ENCODE measurements at regions of chr5 and their contacts with region 1.

Region 1: DNA sequence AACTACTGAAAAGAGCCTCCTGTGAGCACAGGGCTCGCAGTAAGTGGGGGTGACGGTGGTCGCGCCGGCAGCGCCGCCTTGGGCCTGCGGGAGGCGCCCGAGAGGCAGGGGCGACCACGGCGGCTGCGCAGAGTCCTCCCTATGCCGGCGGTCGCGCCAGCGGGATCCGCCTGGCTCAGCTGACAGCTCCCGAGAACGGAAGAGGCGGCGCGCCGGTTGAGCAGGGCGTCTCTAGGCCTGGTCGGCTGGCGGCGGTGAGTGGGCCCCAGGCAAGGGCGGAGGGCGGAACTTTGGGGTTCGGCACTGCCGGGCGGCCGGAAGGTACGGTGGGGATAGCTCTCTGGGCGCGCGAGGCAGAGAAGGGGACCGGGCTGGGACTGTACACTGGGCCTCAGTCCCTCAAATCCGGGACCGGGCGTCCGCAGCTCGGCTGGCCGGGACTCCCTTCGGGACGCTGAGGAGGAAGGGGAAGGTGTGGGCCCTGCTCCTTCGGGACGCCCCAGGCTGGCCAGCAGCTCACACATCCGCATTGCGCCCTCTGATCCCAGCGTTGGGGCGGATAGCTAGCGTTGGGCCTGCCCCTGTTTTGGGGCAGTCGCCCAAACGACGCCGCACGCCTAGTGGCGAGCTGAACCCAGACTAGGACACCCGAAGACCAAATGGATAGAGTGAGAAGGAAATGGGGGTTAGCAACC is at the start of gene RNF14:
- DNase-seq: peak; percentile 90 to 96 (median 92)
- ATAC-seq: peak; percentile 97
- H3K4me3 ChIP-seq: peak within 1 kb of the TSS; percentile 69
- H3K4me3 Mint-ChIP-seq: peak within 1 kb of the TSS; percentile 88 to 97 (median 94)
- H3K27ac ChIP-seq: peak within 1 kb of the TSS; percentile 94
- H3K27ac Mint-ChIP-seq: peak within 1 kb of the TSS; percentile 92 to 98 (median 97)
- H3K4me1 ChIP-seq: peaks cover 13 to 18% of the 10 kb centered on the region in 2 donors
- H3K4me1 Mint-ChIP-seq: peaks cover 12 to 47% (median 40%) of the 10 kb centered on the region in 7 donors
- H3K27me3 ChIP-seq: no peaks in the 10 kb centered on the region
- H3K27me3 Mint-ChIP-seq: peaks cover 0 to 2% (median 0%) of the 10 kb centered on the region in 5 donors
- total RNA-seq, gene RNF14: 14.7 to 32.0 (median 24.8) TPM

Region 2: GRCh38 chr5:141664732-141665461 is 304.2 kb before region 1 on chr5:
- CTCF ChIA-PET with region 1: no interaction called
- POLR2A ChIA-PET with region 1: no interaction called
- intact Hi-C with region 1: loop called in 1 of 2 experiments (anchors 2 kb)
- DNase-seq: peak; percentile 36 to 75 (median 61)
- ATAC-seq: peak; percentile 94
- H3K4me3 ChIP-seq: no peak overlapping the region
- H3K4me3 Mint-ChIP-seq: no peak overlapping the region
- H3K27ac ChIP-seq: no peak overlapping the region
- H3K27ac Mint-ChIP-seq: no peak overlapping the region
- H3K4me1 ChIP-seq: no peaks in the 10 kb centered on the region
- H3K4me1 Mint-ChIP-seq: peaks cover 0 to 6% (median 3%) of the 10 kb centered on the region in 7 donors
- H3K27me3 ChIP-seq: no peaks in the 10 kb centered on the region
- H3K27me3 Mint-ChIP-seq: no peaks in the 10 kb centered on the region

Region 3: GRCh38 chr5:141934099-141934844 is 34.8 kb before region 1 on chr5:
- CTCF ChIA-PET with region 1: no interaction called
- POLR2A ChIA-PET with region 1: no interaction called
- intact Hi-C with region 1: no loop called
- DNase-seq: no peak
- ATAC-seq: no peak
- H3K4me3 ChIP-seq: no peak overlapping the region
- H3K4me3 Mint-ChIP-seq: no peak overlapping the region
- H3K27ac ChIP-seq: no peak overlapping the region
- H3K27ac Mint-ChIP-seq: no peak overlapping the region
- H3K4me1 ChIP-seq: no peaks in the 10 kb centered on the region
- H3K4me1 Mint-ChIP-seq: peaks cover 0 to 18% (median 6%) of the 10 kb centered on the region in 7 donors
- H3K27me3 ChIP-seq: no peaks in the 10 kb centered on the region
- H3K27me3 Mint-ChIP-seq: no peaks in the 10 kb centered on the region

Region 4: GRCh38 chr5:141992349-141992963 is 23.4 kb after region 1 on chr5:
- CTCF ChIA-PET with region 1: interaction called, 13 read pairs
- POLR2A ChIA-PET with region 1: interaction called, 8 read pairs
- intact Hi-C with region 1: no loop called
- DNase-seq: peak; percentile 49 to 77 (median 69)
- ATAC-seq: peak; percentile 88
- H3K4me3 ChIP-seq: no peak overlapping the region
- H3K4me3 Mint-ChIP-seq: no peak overlapping the region
- H3K27ac ChIP-seq: no peak overlapping the region
- H3K27ac Mint-ChIP-seq: peak overlapping the region in 2 of 9 donors; percentile 52 to 71
- H3K4me1 ChIP-seq: no peaks in the 10 kb centered on the region
- H3K4me1 Mint-ChIP-seq: peaks cover 4 to 18% (median 7%) of the 10 kb centered on the region in 7 donors
- H3K27me3 ChIP-seq: no peaks in the 10 kb centered on the region
- H3K27me3 Mint-ChIP-seq: no peaks in the 10 kb centered on the region

Region 5: GRCh38 chr5:142024771-142025304 is 55.8 kb after region 1 on chr5:
- CTCF ChIA-PET with region 1: interaction called, 3 read pairs
- POLR2A ChIA-PET with region 1: interaction called, 8 read pairs
- intact Hi-C with region 1: loop called (anchors 1 to 2 kb)
- DNase-seq: peak; percentile 61 to 85 (median 82)
- ATAC-seq: peak; percentile 100
- H3K4me3 ChIP-seq: peak overlapping the region; percentile 62
- H3K4me3 Mint-ChIP-seq: peak overlapping the region; percentile 81 to 97 (median 92)
- H3K27ac ChIP-seq: peak overlapping the region; percentile 79
- H3K27ac Mint-ChIP-seq: peak overlapping the region; percentile 96 to 100 (median 98)
- H3K4me1 ChIP-seq: peaks cover 4 to 11% of the 10 kb centered on the region in 2 donors
- H3K4me1 Mint-ChIP-seq: peaks cover 5 to 20% (median 18%) of the 10 kb centered on the region in 7 donors
- H3K27me3 ChIP-seq: no peaks in the 10 kb centered on the region
- H3K27me3 Mint-ChIP-seq: no peaks in the 10 kb centered on the region

Region 6: GRCh38 chr5:142221091-142221860 is 252.2 kb after region 1 on chr5:
- CTCF ChIA-PET with region 1: no interaction called
- POLR2A ChIA-PET with region 1: no interaction called
- intact Hi-C with region 1: loop called in 1 of 2 experiments (anchors 10 kb)
- DNase-seq: no peak
- ATAC-seq: no peak
- H3K4me3 ChIP-seq: no peak overlapping the region
- H3K4me3 Mint-ChIP-seq: peak overlapping the region in 3 of 10 donors; percentile 17 to 31 (median 19)
- H3K27ac ChIP-seq: no peak overlapping the region
- H3K27ac Mint-ChIP-seq: peak overlapping the region in 3 of 9 donors; percentile 3 to 52 (median 6)
- H3K4me1 ChIP-seq: peaks cover 6 to 25% of the 10 kb centered on the region in 2 donors
- H3K4me1 Mint-ChIP-seq: peaks cover 18 to 39% (median 34%) of the 10 kb centered on the region in 7 donors
- H3K27me3 ChIP-seq: no peaks in the 10 kb centered on the region
- H3K27me3 Mint-ChIP-seq: peaks cover 0 to 10% (median 0%) of the 10 kb centered on the region in 5 donors

Region 7: GRCh38 chr5:142263346-142263745 is 294.3 kb after region 1 on chr5:
- CTCF ChIA-PET with region 1: no interaction called
- POLR2A ChIA-PET with region 1: no interaction called
- intact Hi-C with region 1: no loop called
- DNase-seq: no peak
- ATAC-seq: no peak
- H3K4me3 ChIP-seq: no peak overlapping the region
- H3K4me3 Mint-ChIP-seq: no peak overlapping the region
- H3K27ac ChIP-seq: no peak overlapping the region
- H3K27ac Mint-ChIP-seq: no peak overlapping the region
- H3K4me1 ChIP-seq: no peaks in the 10 kb centered on the region
- H3K4me1 Mint-ChIP-seq: peaks cover 0 to 3% (median 0%) of the 10 kb centered on the region in 7 donors
- H3K27me3 ChIP-seq: no peaks in the 10 kb centered on the region
- H3K27me3 Mint-ChIP-seq: peaks cover 0 to 15% (median 0%) of the 10 kb centered on the region in 5 donors